ENCODE measurements at regions of chr2 and their contacts with region 1.

Region 1: DNA sequence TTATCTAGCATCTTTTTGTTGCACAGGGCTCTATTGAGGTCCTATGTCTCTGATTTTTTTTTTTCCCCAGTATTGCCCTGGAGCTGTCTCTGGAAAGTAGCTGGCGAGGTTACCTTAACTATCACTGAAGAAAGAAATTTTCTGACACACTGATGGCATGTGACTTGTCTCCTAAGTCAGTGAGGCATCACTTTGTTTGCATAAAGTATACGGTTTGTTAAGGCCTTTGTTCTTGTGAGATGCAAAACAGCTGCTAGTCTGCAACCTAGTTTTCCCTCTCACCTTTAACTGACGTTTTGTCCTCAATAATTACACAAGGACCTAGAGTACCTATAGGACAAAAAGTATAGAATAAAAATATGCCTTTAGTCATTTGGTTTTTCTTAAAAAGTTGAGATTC is 41.8 kb downstream of the UBXN4 start:
- DNase-seq: no peak
- ATAC-seq: no peak
- H3K4me3 ChIP-seq: no peak overlapping the region
- H3K27ac ChIP-seq: no peak overlapping the region
- H3K4me1 ChIP-seq: no peaks in the 10 kb centered on the region
- H3K27me3 ChIP-seq: no peaks in the 10 kb centered on the region
- CTCF ChIP-seq: no peak

Region 2: DNA sequence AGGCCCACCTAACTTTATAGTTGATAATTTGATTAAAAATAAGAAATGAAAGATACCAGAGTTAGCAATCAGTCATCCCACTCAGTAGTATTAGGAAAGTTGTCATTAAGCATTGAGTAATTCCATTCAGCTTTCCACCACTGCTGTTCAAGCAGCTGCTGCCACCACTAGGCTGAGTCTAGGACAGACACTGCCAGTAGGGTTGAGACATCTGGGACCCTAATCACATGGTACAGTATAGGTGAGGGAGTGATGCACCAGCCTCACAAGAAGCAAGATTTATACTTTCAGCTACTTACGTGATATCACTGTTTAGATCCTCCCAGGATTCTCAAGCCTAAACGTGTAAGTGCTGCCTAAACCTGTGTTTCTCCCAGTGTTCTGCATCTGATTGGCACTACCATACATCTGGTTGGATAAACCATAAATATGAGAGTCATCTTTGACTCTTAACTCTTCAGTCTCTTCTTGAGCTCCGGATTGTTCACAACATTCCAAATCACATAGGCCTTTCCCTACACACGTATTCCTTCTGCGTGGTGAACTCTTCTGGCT is 38.6 kb before region 1 on chr2:
- intact Hi-C with region 1: no loop called
- DNase-seq: no peak
- ATAC-seq: peak; percentile 16 to 42 (median 28)
- H3K4me3 ChIP-seq: peak overlapping the region; percentile 97
- H3K27ac ChIP-seq: peak overlapping the region; percentile 100
- H3K4me1 ChIP-seq: peaks cover 41% of the 10 kb centered on the region
- H3K27me3 ChIP-seq: no peaks in the 10 kb centered on the region
- CTCF ChIP-seq: peak; percentile 7

Region 3: GRCh38 chr2:135845257-135845656 is 61.8 kb after region 1 on chr2:
- intact Hi-C with region 1: loop called (anchors 5 to 10 kb)
- DNase-seq: no peak
- ATAC-seq: no peak
- H3K4me3 ChIP-seq: no peak overlapping the region
- H3K27ac ChIP-seq: no peak overlapping the region
- H3K4me1 ChIP-seq: peaks cover 6% of the 10 kb centered on the region
- H3K27me3 ChIP-seq: no peaks in the 10 kb centered on the region
- CTCF ChIP-seq: no peak

Measured in psoas muscle (tissue), 8 donors.